ENCODE measurements at regions of chr2 and their contacts with region 1.

Region 1: DNA sequence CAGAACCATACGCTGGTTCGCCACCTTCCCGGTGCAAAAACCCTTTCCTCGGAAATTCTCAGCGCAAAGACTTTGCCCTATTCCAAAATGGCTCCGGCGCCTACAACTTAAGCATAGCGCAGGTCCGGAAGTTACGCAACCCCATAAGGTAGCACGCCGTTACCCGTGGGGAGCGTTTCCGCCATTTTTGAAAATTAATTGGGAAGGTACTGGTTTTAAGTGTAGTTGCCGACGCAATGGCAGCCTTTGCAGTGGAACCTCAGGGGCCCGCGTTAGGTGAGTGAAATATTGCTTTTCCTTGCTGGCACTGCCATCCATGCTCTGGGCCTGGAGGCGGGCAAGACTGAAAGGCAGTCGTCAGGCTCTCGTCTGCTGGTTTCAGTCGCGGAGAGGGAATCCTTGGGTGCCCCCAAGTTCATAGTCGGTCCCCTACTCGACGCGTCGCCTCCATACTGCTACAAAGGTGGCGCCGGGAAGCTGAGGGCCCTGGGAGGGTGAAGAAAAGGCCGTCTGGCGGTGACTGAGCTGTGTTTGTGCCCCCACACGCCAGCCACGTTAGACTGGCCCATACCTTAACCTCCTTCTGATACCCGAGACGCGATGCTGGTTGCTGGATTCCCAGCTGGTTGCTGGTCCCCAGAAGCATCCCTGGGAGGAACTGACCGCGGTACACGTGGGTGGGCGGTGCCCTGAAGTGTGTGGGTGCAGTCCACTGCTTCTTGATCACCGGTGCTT is at the start of gene NUP35:
- DNase-seq: peak; percentile 88
- H3K4me3 ChIP-seq: peak within 1 kb of the TSS; percentile 84
- CTCF ChIP-seq: no peak

Region 2: GRCh38 chr2:183172220-183172887 is 48.0 kb after region 1 on chr2:
- in situ Hi-C with region 1: no loop called
- DNase-seq: no peak
- H3K4me3 ChIP-seq: no peak overlapping the region
- CTCF ChIP-seq: no peak

Region 3: GRCh38 chr2:183229386-183229785 is 105.0 kb after region 1 on chr2:
- in situ Hi-C with region 1: loop called (anchors 5 kb)
- DNase-seq: peak; percentile 41
- H3K4me3 ChIP-seq: no peak overlapping the region
- CTCF ChIP-seq: no peak

Region 4: GRCh38 chr2:183359867-183360266 is 235.5 kb after region 1 on chr2:
- in situ Hi-C with region 1: loop called (anchors 10 kb)
- DNase-seq: peak; percentile 9
- H3K4me3 ChIP-seq: no peak overlapping the region
- CTCF ChIP-seq: peak; percentile 51